Activated CD4-positive, alpha-beta memory T cell treated with anti-CD3 and anti-CD28 coated beads, Interleukin-2, amount 10 ng/mL, durations not matched to agents 7 days and 5 days (primary cell): ENCODE measurements at regions of chr15 and their contacts with region 1.

Region 1: DNA sequence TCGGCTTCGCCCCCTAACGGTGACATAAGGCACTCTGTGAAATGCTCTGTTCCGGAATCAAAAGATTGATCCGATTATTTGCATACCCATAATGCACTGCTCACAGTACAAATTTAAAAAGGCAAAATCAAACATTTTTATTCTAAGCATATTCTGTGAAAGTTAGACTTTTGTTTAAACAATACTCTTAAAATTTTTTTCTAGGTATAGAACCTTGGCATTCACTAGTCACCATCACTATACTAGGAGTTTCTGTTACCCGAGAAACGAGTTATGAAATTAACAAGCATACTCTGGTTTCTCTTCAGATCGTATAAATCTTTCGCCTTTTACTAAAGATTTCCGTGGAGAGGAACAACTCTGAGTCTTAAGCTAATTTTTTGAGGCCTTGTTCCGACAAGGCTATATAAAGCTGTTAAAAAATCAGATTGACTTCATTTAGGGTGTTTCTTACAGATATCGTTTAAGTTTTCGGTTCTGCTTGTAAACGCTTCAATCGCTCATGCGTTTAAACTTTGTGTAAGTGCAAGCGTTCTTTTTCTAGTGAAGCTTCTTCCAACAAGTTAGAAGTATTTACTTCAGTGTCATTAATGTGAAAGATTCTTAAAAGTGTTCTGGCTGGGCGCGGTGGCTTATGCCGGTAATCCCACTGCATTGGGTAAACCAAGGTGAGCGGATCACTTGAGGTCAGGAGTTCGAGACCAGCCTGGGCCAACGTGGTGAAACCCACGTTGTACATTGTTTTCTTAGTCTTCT is at the start of gene RNU5B-1:
- DNase-seq: peak; percentile 86
- H3K4me3 Mint-ChIP-seq: peak within 1 kb of the TSS; percentile 94
- H3K27ac Mint-ChIP-seq: peak within 1 kb of the TSS; percentile 90
- H3K4me1 Mint-ChIP-seq: peaks cover 37% of the 10 kb centered on the region
- H3K27me3 Mint-ChIP-seq: peaks cover 2% of the 10 kb centered on the region
- total RNA-seq, gene RNU5B-1: 12.9 TPM in 1 of 2 experiments, not detected in the other

Region 2: DNA sequence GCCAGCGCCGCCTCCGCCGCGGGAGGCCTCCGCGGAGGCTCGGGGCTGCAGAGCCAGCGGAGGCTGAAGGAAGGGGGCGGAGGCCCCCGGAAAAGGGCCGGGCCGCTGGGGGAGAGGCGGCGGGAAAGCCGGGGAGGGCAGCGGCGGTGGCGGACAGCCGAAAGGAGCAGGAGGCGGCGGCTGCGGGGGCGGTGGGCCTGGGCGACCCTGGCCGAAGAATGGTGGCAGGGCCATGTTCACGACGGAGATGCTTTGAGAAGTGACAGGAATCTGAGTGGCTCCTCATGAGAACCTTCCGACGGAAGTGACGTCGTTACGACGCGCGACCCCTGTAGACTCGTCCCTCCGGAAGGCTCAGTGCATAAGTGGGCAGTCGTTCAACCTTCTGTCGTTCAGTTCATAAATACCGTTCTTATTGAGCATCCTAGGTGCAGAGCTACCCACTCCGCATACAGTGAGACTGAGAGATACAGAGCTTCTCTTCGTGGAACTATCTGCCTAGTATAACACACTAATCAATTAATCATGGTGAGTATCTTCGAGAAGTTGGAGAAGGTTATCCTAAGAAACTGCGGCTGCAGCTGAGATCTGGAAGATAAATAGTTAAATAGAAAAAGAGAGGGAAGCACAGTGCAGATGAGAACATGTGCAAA is 170.9 kb before region 1 on chr15 and contains the start of gene PDCD7:
- CTCF ChIA-PET with region 1: no interaction called
- POLR2A ChIA-PET with region 1: interaction called, 11 read pairs
- DNase-seq: peak; percentile 87
- H3K4me3 Mint-ChIP-seq: peak within 1 kb of the TSS; percentile 88
- H3K27ac Mint-ChIP-seq: peak within 1 kb of the TSS; percentile 86
- H3K4me1 Mint-ChIP-seq: peaks cover 30% of the 10 kb centered on the region
- H3K27me3 Mint-ChIP-seq: no peaks in the 10 kb centered on the region
- total RNA-seq, gene PDCD7: 37.8 to 38.9 TPM

Region 3: GRCh38 chr15:65231306-65231705 is 73.3 kb before region 1 on chr15:
- CTCF ChIA-PET with region 1: no interaction called
- POLR2A ChIA-PET with region 1: no interaction called
- DNase-seq: no peak
- H3K4me3 Mint-ChIP-seq: no peak overlapping the region
- H3K27ac Mint-ChIP-seq: no peak overlapping the region
- H3K4me1 Mint-ChIP-seq: peaks cover 5% of the 10 kb centered on the region
- H3K27me3 Mint-ChIP-seq: no peaks in the 10 kb centered on the region

Region 4: DNA sequence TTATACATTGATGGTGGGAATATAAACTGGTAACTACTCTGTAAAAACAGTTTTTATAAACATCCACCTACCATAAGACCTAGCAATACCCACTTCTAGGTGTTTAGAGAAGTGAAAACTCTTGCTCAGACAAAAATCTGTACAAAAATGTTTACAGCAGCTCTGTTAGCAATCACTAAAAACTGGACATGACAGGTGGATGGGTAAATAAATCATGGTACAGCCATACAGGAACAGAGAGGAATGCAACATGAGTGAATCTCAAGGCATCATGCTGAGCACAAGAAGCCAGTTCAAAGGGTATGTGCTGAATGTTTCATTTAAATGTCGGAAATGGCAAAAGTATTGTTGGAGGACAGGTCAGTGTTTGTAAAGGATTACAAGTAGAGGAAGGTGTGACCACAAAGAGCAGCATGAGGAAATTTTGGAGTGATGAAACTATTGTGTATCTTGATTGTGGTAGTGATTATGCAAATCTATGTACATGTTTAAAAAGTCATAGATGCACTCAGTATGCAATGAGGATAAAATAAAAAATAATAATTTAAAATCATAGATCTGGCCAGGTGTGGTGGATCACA is 11.5 kb before region 1 on chr15:
- CTCF ChIA-PET with region 1: interaction called, 6 read pairs
- POLR2A ChIA-PET with region 1: interaction called, 166 read pairs
- DNase-seq: no peak
- H3K4me3 Mint-ChIP-seq: no peak overlapping the region
- H3K27ac Mint-ChIP-seq: peak overlapping the region; percentile 69
- H3K4me1 Mint-ChIP-seq: peaks cover 38% of the 10 kb centered on the region
- H3K27me3 Mint-ChIP-seq: no peaks in the 10 kb centered on the region

Region 5: GRCh38 chr15:65333148-65333820 is 28.7 kb after region 1 on chr15:
- CTCF ChIA-PET with region 1: no interaction called
- POLR2A ChIA-PET with region 1: no interaction called
- DNase-seq: no peak
- H3K4me3 Mint-ChIP-seq: no peak overlapping the region
- H3K27ac Mint-ChIP-seq: no peak overlapping the region
- H3K4me1 Mint-ChIP-seq: no peaks in the 10 kb centered on the region
- H3K27me3 Mint-ChIP-seq: no peaks in the 10 kb centered on the region

Region 6: GRCh38 chr15:65363766-65364165 is 59.2 kb after region 1 on chr15:
- CTCF ChIA-PET with region 1: no interaction called
- POLR2A ChIA-PET with region 1: no interaction called
- DNase-seq: no peak
- H3K4me3 Mint-ChIP-seq: no peak overlapping the region
- H3K27ac Mint-ChIP-seq: no peak overlapping the region
- H3K4me1 Mint-ChIP-seq: no peaks in the 10 kb centered on the region
- H3K27me3 Mint-ChIP-seq: peaks cover 17% of the 10 kb centered on the region

Region 7: DNA sequence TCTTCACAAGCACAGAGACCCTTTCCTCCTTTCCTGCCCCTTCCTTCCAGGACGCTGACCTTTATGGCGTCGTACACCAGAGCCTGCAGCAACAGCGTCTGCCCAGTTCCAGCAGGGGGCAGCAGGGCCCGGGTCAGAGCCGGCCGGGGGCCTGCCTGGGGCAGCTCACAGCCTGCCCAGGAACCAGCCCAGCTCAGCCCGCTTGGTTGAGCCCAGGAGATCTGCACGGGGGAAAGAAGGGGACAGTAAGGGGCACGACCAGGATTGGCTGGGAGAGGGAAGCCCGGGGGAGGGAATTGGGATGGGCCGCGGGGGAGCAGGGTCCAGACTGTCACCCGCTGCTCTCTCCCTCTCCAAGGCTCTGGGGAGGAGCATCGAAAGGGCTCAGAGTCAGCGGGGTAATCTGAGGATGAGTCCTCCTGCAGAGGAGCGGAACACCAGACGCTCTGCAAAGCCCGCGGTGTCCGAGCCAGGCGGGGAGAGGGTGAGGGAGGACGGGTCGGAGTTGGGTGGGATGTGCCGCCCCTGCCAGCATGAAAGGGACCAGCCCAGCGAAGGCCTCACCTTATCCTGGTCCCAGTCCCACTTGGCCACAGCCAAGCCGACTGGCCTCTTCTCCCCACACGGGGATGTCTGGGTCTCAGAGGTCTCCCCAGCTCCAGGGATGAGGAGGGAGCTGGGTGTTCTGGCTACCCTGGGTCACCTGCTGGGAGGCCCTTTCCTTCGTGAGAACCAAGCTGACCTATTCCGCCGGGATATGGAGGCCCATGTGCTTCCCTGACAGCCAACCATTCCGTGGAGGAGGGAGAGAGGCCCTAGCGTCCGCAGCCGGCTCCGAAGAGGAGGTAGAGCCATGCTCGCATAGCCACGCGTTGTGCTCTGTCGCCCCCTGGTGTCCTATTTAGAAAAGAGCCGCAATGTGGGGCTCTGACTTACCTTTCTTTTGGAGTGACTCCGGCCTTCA is 80.6 kb after region 1 on chr15:
- CTCF ChIA-PET with region 1: interaction called, 9 read pairs
- POLR2A ChIA-PET with region 1: interaction called, 14 read pairs
- DNase-seq: peak; percentile 83
- H3K4me3 Mint-ChIP-seq: peak overlapping the region; percentile 78
- H3K27ac Mint-ChIP-seq: no peak overlapping the region
- H3K4me1 Mint-ChIP-seq: peaks cover 9% of the 10 kb centered on the region
- H3K27me3 Mint-ChIP-seq: peaks cover 35% of the 10 kb centered on the region

Region 8: DNA sequence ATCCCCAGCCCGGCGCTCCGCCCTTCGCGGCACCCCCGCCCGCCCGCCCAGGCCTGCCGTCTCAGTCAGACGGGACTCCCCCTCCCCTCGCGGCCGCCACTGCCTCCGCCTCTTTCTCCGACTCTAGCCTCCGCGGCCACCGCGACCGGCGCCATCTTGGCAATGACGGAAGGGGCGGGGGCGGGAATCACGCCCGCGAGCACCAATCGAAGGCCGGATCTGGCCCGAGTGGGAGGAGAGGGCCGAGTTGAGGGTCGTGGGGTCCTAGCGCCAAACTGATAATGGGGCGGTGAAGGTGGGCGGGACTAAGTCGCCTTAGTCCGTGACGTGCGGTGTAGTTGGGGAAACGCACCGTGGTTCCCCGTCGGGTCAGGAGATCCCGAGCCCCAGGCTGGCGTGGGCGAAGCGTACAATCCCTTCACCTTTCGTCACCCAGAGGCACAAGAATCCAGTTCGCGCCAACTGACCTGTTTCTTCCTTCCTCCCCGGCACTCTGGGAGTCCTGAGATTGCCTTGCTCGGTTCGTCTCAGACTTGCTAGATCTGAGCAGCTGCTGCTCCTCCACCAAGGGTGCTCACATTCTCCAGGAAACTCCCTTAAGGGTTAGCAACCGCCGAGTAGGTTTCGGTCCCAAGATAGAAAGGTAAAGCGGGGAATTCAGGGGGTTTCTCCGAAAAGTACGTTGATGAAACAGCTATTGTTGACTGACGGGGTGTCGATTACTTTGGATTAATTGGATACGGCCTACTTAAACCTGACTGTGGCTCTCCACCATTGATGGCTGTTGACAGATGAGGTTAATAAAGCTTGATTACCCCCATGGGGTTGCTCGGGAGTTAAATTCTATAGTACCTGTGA is 487.8 kb after region 1 on chr15 and contains the start of gene DENND4A:
- CTCF ChIA-PET with region 1: no interaction called
- POLR2A ChIA-PET with region 1: interaction called, 16 read pairs
- DNase-seq: peak; percentile 99
- H3K4me3 Mint-ChIP-seq: peak within 1 kb of the TSS; percentile 83
- H3K27ac Mint-ChIP-seq: peak within 1 kb of the TSS; percentile 95
- H3K4me1 Mint-ChIP-seq: peaks cover 69% of the 10 kb centered on the region
- H3K27me3 Mint-ChIP-seq: no peaks in the 10 kb centered on the region
- total RNA-seq, gene DENND4A: 40.4 to 41.1 TPM